ENCODE measurements at regions of chr16 and their contacts with region 1.

Region 1: GRCh38 chr16:55465077-55465896 is 13.7 kb upstream of the MMP2 start:
- DNase-seq: peak; percentile 94
- ATAC-seq: peak; percentile 88
- H3K4me3 Mint-ChIP-seq: no peak overlapping the region
- H3K27ac Mint-ChIP-seq: no peak overlapping the region
- H3K4me1 Mint-ChIP-seq: peaks cover 7% of the 10 kb centered on the region
- H3K27me3 Mint-ChIP-seq: peaks cover 24% of the 10 kb centered on the region
- CTCF ChIP-seq: peak; percentile 99

Region 2: GRCh38 chr16:54946909-54947308 is 518.4 kb before region 1 on chr16:
- CTCF ChIA-PET with region 1: no interaction called
- POLR2A ChIA-PET with region 1: no interaction called
- DNase-seq: no peak
- ATAC-seq: no peak
- H3K4me3 Mint-ChIP-seq: no peak overlapping the region
- H3K27ac Mint-ChIP-seq: no peak overlapping the region
- H3K4me1 Mint-ChIP-seq: peaks cover 12% of the 10 kb centered on the region
- H3K27me3 Mint-ChIP-seq: peaks cover 56% of the 10 kb centered on the region
- CTCF ChIP-seq: no peak

Region 3: DNA sequence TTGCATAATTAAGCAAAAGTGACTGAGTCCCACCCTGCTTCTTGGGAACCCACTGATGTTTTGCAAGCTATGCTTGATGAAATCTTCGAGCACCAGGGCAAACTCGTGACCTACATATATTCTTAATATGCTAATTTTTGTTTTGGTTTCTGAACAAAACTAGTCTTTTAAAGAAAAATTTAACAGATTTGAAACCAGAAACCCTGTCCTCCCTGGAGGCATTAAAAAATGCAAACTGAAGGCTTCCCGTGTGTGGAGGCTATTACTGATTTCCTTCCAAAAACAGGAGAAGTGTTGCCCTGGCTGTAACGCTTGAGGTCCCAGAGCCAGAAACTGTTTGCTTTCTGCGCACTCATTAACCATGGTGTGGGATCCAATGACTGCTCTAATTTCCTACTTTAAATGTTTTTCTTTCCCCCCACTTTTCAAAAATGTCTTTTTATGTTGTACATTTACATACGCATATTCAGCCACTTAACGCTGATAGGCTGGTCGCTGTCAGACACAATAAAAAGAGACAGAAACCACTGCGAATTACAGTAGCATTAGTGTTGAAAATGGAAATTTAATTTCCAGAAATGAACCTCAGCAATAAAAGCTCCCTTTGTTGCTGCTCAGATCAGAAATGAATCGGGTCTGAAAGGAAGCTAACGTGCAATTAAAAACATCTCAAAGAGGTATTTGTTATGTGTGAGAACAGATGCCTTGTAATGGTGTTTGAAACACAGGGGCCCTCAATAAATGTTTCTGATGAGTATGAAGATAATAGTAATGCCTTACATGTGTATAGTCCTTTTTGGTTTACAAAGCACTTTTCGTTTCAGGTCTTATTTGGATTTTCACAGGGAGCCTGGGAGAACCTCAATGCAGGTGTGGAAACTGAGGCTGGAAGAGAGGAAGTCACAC is 181.2 kb before region 1 on chr16:
- CTCF ChIA-PET with region 1: no interaction called
- POLR2A ChIA-PET with region 1: no interaction called
- DNase-seq: no peak
- ATAC-seq: no peak
- H3K4me3 Mint-ChIP-seq: no peak overlapping the region
- H3K27ac Mint-ChIP-seq: no peak overlapping the region
- H3K4me1 Mint-ChIP-seq: peaks cover 11% of the 10 kb centered on the region
- H3K27me3 Mint-ChIP-seq: peaks cover 4% of the 10 kb centered on the region; the same call in 1 of the 2 replicates
- CTCF ChIP-seq: no peak

Region 4: GRCh38 chr16:55349867-55350266 is 115.4 kb before region 1 on chr16:
- CTCF ChIA-PET with region 1: no interaction called
- POLR2A ChIA-PET with region 1: no interaction called
- DNase-seq: no peak
- ATAC-seq: no peak
- H3K4me3 Mint-ChIP-seq: no peak overlapping the region
- H3K27ac Mint-ChIP-seq: no peak overlapping the region
- H3K4me1 Mint-ChIP-seq: no peaks in the 10 kb centered on the region
- H3K27me3 Mint-ChIP-seq: no peaks in the 10 kb centered on the region
- CTCF ChIP-seq: no peak

Region 5: DNA sequence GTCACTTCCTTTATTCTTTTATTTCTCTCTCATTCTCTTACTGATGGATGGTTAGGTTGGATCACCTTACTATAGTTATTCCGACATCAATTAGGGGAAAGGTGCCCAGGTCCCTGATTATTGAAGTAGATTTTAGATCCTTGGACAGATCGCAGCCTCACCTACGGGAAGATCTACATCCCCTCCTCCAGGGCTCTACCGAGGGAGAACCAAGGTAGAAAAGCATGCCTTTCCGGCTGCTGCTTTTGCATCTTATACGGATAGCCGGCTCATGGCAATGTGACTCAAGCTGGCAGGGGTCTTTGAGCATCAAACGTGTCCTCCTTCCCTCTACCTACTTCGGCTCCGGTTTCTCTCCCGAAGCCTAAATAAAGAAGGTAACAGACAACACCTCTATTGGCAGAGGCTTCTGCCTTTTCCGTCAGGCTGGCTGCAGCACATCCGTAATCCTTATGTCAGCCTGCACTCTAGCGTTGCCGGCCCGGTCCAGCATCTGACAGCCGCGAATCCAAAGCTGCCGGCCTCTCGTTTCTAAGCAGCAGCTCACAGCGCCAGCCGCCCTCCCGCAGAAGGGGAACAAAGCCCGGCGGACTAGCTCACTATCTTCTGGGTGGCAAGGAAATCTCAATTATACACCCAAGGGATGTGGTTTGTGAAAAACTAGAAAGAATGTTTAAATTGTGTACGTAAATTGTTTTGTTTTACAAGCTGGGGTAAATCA is 94.4 kb before region 1 on chr16:
- CTCF ChIA-PET with region 1: interaction called, 13 read pairs
- POLR2A ChIA-PET with region 1: no interaction called
- DNase-seq: peak; percentile 73
- ATAC-seq: peak; percentile 97
- H3K4me3 Mint-ChIP-seq: peak overlapping the region; percentile 41
- H3K27ac Mint-ChIP-seq: no peak overlapping the region
- H3K4me1 Mint-ChIP-seq: peaks cover 17% of the 10 kb centered on the region
- H3K27me3 Mint-ChIP-seq: peaks cover 24% of the 10 kb centered on the region
- CTCF ChIP-seq: no peak

Region 6: GRCh38 chr16:55494994-55495421 is 29.7 kb after region 1 on chr16:
- CTCF ChIA-PET with region 1: interaction called, 14 read pairs
- POLR2A ChIA-PET with region 1: no interaction called
- DNase-seq: no peak
- ATAC-seq: peak; percentile 81
- H3K4me3 Mint-ChIP-seq: no peak overlapping the region
- H3K27ac Mint-ChIP-seq: 0 out of 2 replicates have a peak overlapping the region, but pooled peaks have one; percentile 30
- H3K4me1 Mint-ChIP-seq: peaks cover 14% of the 10 kb centered on the region
- H3K27me3 Mint-ChIP-seq: no peaks in the 10 kb centered on the region
- CTCF ChIP-seq: no peak

Region 7: GRCh38 chr16:55529018-55529417 is 63.7 kb after region 1 on chr16:
- CTCF ChIA-PET with region 1: interaction called, 19 read pairs
- POLR2A ChIA-PET with region 1: no interaction called
- DNase-seq: no peak
- ATAC-seq: no peak
- H3K4me3 Mint-ChIP-seq: no peak overlapping the region
- H3K27ac Mint-ChIP-seq: no peak overlapping the region
- H3K4me1 Mint-ChIP-seq: peaks cover 5% of the 10 kb centered on the region
- H3K27me3 Mint-ChIP-seq: no peaks in the 10 kb centered on the region
- CTCF ChIP-seq: no peak

Region 8: GRCh38 chr16:55552621-55553020 is 87.3 kb after region 1 on chr16:
- CTCF ChIA-PET with region 1: interaction called, 46 read pairs
- POLR2A ChIA-PET with region 1: no interaction called
- DNase-seq: no peak
- ATAC-seq: no peak
- H3K4me3 Mint-ChIP-seq: no peak overlapping the region
- H3K27ac Mint-ChIP-seq: no peak overlapping the region
- H3K4me1 Mint-ChIP-seq: no peaks in the 10 kb centered on the region
- H3K27me3 Mint-ChIP-seq: no peaks in the 10 kb centered on the region
- CTCF ChIP-seq: no peak

Region 9: DNA sequence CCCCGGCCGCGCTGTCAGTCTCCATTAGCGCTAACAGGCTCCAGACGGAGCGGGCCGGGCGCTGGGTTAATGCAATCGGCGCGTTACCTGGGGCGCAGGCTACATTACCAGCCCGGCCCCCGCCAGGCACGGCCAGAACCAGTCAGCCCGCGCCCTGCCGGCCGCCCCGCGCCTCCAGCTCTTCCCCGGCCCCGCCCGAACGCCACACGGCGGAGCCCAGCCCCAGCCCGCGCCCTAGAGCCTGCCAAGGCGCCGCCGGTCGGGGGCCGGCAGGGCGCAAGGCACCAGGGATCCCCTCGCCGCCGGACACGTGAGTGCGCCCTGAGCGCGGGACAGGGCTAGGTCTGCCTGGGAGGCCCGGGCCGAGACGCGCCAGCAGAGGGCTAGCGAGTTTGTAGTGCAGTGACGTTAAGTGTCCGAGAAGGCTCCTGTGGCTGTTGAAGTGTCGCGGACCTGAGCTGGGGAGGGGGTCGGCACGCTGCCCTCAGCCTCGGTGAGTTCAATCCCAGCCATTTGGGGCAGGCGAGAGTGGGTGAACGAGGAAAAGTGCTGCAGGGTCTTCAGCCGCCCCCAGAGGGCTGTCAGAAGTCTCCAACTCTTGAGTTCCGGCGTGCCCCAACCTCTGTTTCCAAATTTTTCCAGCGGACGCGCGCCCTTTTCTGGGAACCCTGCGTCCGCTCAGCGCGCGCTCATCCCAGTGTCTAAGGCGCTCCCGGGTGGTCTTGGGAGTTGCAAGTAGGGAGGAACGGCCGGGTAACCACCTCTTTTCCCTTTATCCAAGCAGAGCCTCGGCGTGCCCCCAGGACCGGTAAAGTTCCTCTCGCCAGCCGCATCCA is 190.8 kb after region 1 on chr16 and contains the start of gene SLC6A2:
- CTCF ChIA-PET with region 1: interaction called, 25 read pairs
- POLR2A ChIA-PET with region 1: no interaction called
- DNase-seq: peak; percentile 67
- ATAC-seq: peak; percentile 71
- H3K4me3 Mint-ChIP-seq: peak within 1 kb of the TSS; percentile 79
- H3K27ac Mint-ChIP-seq: no peak within 1 kb of the TSS
- H3K4me1 Mint-ChIP-seq: peaks cover 8% of the 10 kb centered on the region
- H3K27me3 Mint-ChIP-seq: peaks cover 47% of the 10 kb centered on the region
- CTCF ChIP-seq: no peak
- total RNA-seq, gene SLC6A2: 0.16 to 0.30 TPM (median 0.20 TPM) in 3 replicates

Region 10: GRCh38 chr16:55687802-55688201 is 222.5 kb after region 1 on chr16:
- CTCF ChIA-PET with region 1: interaction called, 13 read pairs
- POLR2A ChIA-PET with region 1: no interaction called
- DNase-seq: no peak
- ATAC-seq: no peak
- H3K4me3 Mint-ChIP-seq: no peak overlapping the region
- H3K27ac Mint-ChIP-seq: no peak overlapping the region
- H3K4me1 Mint-ChIP-seq: peaks cover 23% of the 10 kb centered on the region
- H3K27me3 Mint-ChIP-seq: no peaks in the 10 kb centered on the region; the same call in 1 of the 2 replicates
- CTCF ChIP-seq: no peak